ENCODE measurements at regions of chr14 and their contacts with region 1.

Region 1: DNA sequence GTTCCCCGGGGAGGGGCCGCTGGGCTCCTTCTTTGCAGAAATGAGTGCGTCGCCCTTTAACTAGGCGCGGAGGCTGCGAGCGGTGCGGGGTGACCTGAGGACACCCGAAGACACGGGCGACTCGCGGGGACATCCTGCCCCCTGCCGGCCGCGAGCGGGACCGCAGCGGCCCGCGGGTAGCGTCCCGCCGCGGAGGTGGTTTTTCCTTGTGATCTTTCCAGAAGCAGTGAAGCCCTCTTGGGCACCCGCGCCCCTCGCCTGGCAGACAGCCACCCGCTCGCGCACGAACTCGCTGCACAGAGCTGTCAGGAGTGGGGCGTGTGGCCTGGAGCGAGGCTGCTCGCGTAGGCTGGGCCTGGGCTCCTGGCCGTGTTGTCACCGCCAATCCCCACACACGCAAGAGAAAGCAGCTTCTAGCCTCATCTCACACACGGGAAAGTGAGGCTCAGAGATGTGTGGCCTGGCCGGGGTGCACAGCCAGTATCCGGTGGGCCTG is 67.2 kb downstream of the DIO3 start:
- DNase-seq: peak; percentile 86
- ATAC-seq: peak; percentile 97

Region 2: DNA sequence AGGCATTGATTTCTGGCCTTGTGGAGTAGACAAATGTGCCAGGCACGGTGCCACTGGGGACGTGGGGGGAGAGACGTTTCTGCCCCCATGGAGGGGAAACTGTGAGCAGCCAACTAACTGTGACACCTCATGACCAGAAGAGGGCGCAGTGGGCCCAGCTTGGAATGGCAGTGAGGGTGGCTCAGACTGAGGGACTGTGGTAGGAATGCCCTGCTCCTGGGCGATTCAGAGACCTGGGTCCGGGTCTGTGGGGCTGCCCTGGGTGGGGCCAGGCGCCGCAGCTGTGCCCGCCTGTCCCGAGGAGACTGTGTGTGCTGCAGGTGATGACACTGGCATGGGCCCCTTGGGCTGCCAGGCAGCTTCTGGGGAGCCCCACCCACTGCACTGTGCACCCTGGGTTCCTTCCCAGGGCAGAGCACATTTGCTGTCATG is 1244.8 kb before region 1 on chr14:
- intact Hi-C with region 1: loop called (anchors 5 kb)
- DNase-seq: peak; percentile 67
- ATAC-seq: peak; percentile 75

Region 3: DNA sequence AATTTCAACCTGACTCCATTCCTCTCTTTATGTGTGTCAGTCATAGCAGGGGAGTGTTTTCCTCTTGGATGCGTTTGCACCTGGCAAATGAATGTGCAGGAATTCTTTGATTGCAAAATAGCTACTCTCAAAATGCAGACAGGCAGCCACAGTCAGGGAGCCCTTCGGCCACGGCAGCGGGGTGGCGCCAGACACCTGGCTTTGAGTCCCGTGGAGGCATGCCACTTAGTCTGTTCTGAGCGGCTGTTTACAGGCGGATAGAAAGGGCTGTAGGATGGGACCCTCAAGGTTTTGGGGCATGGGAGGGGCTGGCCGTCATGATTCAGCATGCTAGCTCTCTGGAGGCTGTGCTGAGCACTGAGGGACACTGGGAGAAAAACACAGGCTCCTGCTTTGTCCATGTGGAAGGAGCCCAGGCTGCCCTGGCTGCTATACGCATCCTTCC is 1188.3 kb before region 1 on chr14:
- intact Hi-C with region 1: loop called (anchors 10 kb)
- DNase-seq: peak; percentile 84
- ATAC-seq: peak; percentile 95

Region 4: DNA sequence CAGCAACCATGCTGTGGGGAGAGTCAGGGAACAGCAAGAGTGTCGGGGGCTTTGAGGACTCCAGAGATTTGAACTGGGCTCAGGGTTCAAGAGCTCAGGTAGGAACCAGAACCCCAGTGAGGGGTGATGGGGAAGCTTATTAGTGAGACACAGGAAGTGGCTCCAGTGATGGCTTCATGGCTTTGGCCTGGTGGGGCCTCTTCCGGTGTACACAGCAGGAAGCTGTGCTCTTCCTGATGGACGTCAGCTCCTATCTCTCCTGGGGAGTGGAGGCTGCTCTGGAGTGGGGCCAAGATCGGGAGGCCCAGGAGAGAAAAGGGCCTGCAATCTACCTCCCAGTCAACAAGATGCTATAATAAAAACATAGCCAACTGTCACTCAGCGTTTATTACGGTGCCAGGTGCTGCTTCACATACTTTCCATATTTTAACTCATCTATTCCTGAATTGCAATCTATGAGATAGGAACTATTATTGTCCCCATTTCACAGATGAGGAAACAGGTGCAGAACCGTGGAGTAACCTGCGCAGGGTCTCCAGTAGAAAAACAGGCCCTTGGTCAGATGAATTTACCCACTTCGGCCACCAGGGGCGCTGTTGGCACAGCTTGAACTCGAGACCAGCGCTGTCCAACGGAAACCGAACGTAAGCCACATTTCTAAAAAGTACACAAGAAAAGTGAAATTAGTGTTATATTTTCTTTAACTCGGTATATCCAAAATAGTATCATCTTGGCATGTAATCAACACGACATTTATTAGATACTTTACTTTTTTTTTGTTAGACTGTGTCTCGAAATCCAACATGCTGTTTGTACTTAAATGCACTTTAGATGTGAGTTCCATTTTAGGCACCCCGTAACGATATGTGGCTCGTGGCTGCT is 965.4 kb before region 1 on chr14:
- intact Hi-C with region 1: loop called (anchors 10 kb)
- DNase-seq: peak; percentile 80
- ATAC-seq: peak; percentile 58

Region 5: DNA sequence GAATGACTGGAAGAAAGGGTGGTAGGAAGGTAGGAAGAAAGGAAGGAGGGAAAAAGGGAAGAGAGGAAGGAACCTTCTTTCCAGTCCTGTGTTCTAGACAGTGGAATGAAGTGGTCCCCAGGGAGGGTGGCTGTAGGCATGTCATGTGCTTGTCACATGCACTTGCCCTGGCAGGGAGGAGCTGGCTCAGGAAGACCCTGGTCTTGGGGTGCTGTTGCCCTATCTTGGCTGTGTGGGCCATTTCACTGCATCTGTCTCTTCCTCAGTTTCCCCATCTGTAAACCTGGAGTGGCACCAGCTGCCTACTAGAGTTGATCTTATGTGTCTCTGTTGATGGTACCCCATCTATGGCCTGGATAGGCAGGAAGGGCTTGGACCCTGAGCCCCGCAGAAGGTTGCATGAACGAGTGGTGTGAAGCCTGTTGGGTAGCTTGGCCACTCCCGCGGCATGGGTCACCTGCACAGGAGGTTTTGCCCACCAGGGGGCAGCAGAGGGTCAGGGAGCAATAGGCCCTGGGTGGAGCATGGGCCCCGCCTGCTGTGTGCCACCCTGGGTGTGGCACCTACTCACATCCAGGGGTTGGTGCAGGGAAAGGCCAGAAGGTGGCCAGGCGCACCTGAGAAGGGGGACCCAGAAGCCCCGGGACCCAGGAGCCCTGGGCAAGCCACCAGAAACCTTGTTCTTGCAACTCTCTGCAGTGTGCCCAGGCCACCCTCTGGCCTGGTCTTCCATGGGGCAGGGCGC is 777.5 kb before region 1 on chr14:
- intact Hi-C with region 1: loop called (anchors 10 kb)
- DNase-seq: peak; percentile 78
- ATAC-seq: peak; percentile 75

Region 6: DNA sequence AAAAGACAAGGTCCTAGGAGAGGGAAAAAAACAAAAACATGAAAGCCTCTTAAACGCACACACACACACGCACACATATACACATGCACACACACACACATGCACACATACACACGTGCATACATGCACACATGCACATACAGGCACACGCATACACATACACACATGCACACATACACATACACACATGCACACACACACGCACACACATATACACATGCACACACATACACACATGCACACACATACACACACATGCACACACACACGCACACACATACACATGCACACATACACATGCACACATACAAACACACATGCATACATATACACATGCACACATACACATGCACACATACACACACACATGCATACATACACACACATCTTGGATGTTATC is 54.8 kb after region 1 on chr14:
- intact Hi-C with region 1: no loop called
- DNase-seq: no peak
- ATAC-seq: no peak

Measured in Right ventricle myocardium superior (tissue), 1 donor.